Stomach (tissue), 19 donors: ENCODE measurements at regions of chr19 and their contacts with region 1.

Region 1: GRCh38 chr19:36169084-36169760 is 17.0 kb upstream of the COX7A1 start:
- DNase-seq: peak; percentile 35 to 50
- H3K4me3 ChIP-seq: no peak overlapping the region
- H3K27ac ChIP-seq: peak overlapping the region; percentile 59 to 77 (median 75)
- H3K4me1 ChIP-seq: peaks cover 12 to 25% (median 19%) of the 10 kb centered on the region in 4 donors
- H3K27me3 ChIP-seq: no peaks in the 10 kb centered on the region
- CTCF ChIP-seq: no peak
- EP300 ChIP-seq: no peak
- POLR2A ChIP-seq: no peak

Region 2: GRCh38 chr19:36120092-36120983 is 48.9 kb before region 1 on chr19:
- intact Hi-C with region 1: loop called (anchors 5 kb)
- DNase-seq: no peak
- H3K4me3 ChIP-seq: no peak overlapping the region
- H3K27ac ChIP-seq: no peak overlapping the region
- H3K4me1 ChIP-seq: peaks cover 12 to 34% (median 19%) of the 10 kb centered on the region in 4 donors
- H3K27me3 ChIP-seq: no peaks in the 10 kb centered on the region
- CTCF ChIP-seq: no peak
- EP300 ChIP-seq: no peak
- POLR2A ChIP-seq: no peak